H1 (cell line): ENCODE measurements at regions of chr10 and their contacts with region 1.

Region 1: DNA sequence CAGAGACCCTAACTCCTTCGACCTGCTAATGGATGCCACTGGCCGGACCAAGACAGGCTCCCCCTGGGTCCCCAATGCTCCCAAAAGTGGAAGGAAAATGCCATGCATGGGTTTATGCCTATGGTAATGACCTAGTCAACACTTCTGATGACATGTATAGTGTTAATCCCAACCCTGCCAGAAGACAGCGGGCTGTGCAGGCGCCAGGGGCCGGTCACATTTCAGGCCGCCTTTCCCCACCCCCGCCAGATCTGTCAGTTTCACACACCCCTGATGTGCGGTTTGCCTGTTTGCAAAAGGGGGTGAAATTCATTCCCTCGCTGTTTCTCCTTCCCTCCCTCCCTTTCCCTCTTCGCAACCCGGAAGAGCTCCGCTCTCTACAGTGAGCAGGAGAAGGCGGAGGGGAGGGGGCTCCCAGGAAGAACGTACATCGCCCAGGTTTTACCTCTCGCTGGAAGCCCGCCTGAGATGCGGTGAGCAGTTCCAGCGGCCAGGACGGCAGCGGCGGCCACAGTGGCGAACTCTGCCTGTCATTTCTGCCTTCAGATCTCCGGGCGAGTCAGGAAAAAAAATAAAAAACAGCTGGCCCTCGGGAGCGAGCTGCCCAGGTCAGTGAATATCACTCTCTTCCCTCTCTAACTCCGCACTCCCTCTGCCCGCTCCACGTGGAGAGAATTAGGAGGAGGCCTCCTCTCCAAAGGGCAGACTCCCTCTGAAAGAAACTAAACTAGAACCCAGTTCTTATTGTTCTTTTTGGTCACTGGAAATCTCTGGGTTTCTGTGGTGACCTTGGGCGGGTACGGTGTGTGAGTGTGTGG is 9.4 kb upstream of the GATA3 start:
- DNase-seq: peak in 1 of 2 experiments; percentile 76
- H3K4me3 ChIP-seq: peak overlapping the region; percentile 24 to 58 (median 42); a peak in 5 of 8 replicates
- H3K27ac ChIP-seq: no peak overlapping the region
- H3K4me1 ChIP-seq: peaks cover 9 to 59% (median 31%) of the 10 kb centered on the region in 4 experiments
- H3K27me3 ChIP-seq: peaks cover 90 to 100% (median 99%) of the 10 kb centered on the region in 4 experiments
- CTCF ChIP-seq: no peak
- EP300 ChIP-seq: no peak
- POLR2A ChIP-seq: no peak
- RAD21 ChIP-seq: no peak

Region 2: DNA sequence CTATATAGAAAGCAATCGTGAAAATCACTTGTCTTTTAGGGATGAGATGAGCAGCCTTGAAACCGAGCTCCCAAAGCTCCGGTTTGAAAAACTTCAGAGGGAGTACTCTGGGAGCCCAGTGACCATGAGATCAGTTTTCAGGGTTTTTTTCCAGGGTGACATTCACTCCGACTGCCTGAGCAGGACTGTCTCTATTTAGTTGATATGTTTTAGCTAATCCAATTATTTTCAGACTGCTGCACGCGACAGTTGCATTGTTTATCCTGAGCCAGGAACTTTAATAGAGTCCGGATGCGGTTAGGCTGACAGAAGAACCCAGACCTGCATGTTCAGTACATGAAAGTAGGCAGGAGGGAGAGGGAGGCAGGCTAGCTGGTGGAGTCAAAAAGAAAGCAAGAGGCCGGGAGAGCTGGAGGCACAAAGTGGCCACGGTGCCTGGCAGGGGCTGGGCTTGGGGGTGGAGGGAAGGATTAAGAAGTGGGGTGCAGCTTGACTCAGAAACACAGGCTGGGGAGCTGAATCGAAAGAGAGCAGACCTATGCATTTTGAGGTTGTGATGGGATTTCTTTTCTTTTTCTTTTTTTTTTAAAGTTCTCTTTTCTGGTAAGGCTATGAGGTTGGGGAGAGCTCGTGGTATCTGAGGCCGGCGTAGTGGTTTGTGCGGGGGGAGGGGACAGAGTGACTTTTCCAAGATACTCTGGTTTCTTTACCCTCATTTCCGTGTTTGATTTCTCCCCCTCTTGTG is 15.0 kb after region 1 on chr10:
- CTCF ChIA-PET with region 1: interaction called, 4 read pairs
- POLR2A ChIA-PET with region 1: interaction called, 11 read pairs
- DNase-seq: peak in 1 of 2 experiments; percentile 51
- H3K4me3 ChIP-seq: peak overlapping the region in 2 of 4 experiments; percentile 13 to 47; a peak in 4 of 8 replicates
- H3K27ac ChIP-seq: no peak overlapping the region
- H3K4me1 ChIP-seq: peaks cover 36 to 58% (median 42%) of the 10 kb centered on the region in 4 experiments
- H3K27me3 ChIP-seq: peaks cover 65 to 99% (median 92%) of the 10 kb centered on the region in 4 experiments
- CTCF ChIP-seq: no peak
- EP300 ChIP-seq: no peak
- POLR2A ChIP-seq: no peak
- RAD21 ChIP-seq: no peak